WTC11 (cell line): ENCODE measurements at regions of chr20 and their contacts with region 1.

Region 1: DNA sequence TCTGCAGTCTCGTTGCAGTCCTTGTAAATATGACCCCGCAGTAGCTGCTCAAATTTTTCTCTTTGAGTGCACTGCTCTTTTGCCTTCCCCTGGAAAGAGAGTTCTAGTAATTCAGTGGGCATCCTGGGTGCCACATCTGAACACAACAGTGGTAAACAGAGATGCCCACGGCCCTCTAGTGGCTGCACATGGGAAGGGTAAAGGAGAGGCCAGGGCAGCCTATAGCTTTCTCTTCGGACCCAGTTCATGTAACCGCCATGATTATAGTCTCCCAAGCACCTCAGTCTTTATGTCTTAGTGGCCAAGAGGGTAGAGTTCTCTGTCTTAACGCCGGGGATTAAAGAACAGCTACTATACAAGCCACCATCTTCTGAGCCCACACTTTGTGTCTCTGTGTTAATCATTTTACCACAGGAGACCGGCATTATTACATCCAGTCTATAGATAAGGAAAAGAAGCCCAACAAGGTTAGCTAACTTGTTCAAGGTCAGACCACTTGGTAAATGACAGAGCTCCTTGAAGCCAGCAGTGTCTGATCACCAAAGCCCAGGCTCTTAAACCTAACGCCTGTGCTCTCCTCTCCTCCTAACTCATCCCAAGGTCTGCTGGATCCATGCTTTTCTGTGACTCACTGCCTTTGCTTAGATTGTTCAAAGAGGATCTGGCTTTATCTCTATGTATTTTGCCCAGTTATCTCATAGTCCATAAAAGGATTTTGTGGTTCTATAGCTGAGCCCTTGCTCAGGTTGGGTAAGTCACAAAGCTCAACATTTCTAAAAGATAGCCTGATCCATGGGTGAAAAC is 81.8 kb downstream of the ISM1 start:
- DNase-seq: peak; percentile 54
- ATAC-seq: peak; percentile 91
- H3K4me3 Mint-ChIP-seq: no peak overlapping the region
- H3K27ac Mint-ChIP-seq: no peak overlapping the region
- H3K4me1 Mint-ChIP-seq: 0 out of 2 replicates have a peak, but pooled peaks cover 4% of the 10 kb centered on the region
- H3K27me3 Mint-ChIP-seq: no peaks in the 10 kb centered on the region; the same call in 1 of the 2 replicates
- CTCF ChIP-seq: peak; percentile 39; the same call in 1 of the 2 replicates

Region 2: DNA sequence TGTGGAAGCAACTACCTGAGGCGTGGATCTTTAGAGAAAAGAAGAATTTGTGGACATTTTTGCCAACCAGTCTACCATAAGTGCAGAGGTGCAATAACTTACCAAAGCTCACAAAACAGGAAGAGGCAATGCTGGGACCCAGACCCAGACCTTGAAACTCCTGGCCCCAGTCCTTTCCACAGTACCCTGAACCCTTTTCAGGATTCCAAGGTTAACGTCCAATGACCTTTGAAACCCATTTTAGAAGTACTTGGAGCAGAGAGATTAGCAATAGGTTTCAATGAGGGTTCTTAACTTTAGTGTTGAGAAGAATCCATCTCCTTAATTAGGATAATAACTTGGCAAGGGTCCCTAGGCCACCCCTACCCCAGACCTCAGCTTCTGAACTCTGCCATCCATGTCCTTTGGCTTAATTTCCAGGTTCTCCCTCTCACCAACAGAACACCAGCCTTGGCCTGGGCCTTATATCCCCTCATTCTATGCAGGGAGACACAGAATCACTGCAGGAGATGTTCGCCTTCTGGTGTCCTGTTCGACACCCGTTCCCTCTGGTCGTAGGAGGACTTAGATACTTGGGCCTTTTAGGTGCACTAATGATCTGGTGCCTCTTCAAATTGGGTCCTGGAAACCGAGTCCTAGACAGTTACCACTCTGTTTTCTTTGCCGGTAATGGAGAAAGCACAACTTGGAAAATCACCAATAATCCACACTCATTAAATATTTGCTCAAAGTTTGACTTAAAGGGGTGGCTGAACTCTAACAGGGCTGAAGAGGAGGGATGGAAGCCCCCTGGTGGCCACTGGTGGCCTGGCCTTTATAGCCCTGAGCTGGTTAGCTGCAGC is 41.2 kb before region 1 on chr20:
- CTCF ChIA-PET with region 1: interaction called, 17 read pairs
- POLR2A ChIA-PET with region 1: no interaction called
- DNase-seq: peak; percentile 78
- ATAC-seq: peak; percentile 99
- H3K4me3 Mint-ChIP-seq: no peak overlapping the region
- H3K27ac Mint-ChIP-seq: no peak overlapping the region
- H3K4me1 Mint-ChIP-seq: no peaks in the 10 kb centered on the region
- H3K27me3 Mint-ChIP-seq: no peaks in the 10 kb centered on the region
- CTCF ChIP-seq: peak; percentile 81

Region 3: DNA sequence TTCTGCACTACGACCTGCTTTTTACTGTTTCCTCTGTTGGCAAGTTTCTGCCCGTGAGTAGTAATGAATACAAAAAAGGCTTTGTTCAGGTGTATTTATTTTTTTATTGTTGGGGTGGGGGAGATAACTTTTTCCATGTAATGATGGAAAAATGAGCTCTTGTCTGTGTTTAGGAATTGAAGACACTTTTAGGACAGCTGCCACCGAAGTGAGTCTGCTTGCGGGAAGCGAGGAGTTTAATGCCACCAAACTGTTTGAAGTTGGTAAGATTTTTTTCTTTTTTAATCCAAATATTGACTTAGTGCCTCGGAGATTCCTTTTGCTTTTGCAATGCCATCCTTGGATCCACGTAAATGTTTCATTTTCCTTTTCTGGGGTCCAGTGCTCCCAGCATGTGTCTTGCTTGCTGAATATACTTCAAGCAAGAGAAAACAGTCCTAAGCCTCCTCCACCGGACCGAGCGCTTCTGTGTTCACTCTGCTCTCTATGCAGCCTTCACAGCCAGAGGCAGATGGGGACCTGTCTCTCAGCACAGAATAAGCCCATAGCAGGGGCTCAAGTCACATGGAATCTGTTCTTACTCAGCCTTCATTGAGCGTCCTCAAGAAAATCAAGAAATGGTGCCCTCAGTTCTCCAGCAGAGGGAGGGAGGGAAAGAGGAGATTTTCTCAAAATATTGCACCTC is 10.5 kb before region 1 on chr20:
- CTCF ChIA-PET with region 1: interaction called, 12 read pairs
- POLR2A ChIA-PET with region 1: interaction called, 8 read pairs
- DNase-seq: no peak
- ATAC-seq: no peak
- H3K4me3 Mint-ChIP-seq: no peak overlapping the region
- H3K27ac Mint-ChIP-seq: no peak overlapping the region
- H3K4me1 Mint-ChIP-seq: peaks cover 4% of the 10 kb centered on the region; the same call in 1 of the 2 replicates
- H3K27me3 Mint-ChIP-seq: no peaks in the 10 kb centered on the region
- CTCF ChIP-seq: no peak

Region 4: DNA sequence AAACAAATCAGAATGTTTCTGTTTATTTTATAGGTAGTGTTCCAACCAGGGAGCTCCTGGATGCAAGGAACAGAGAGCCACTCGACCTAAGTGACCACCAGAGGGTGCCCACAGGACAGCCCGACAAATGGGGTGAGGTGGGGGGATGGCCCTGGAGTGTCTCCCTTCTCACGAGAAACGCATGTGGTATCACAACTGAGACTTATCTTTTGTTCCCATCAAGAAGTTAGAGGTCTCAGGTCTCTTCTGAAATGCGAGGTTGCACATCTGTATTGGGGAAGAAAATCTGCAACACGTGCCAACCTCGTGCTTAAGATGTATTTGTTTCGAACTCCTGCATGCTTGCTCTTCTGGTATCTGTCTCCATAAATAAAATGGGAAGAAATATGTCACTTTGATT is 22.2 kb after region 1 on chr20:
- CTCF ChIA-PET with region 1: interaction called, 19 read pairs
- POLR2A ChIA-PET with region 1: no interaction called
- DNase-seq: peak; percentile 78
- ATAC-seq: peak; percentile 99
- H3K4me3 Mint-ChIP-seq: no peak overlapping the region
- H3K27ac Mint-ChIP-seq: no peak overlapping the region
- H3K4me1 Mint-ChIP-seq: peaks cover 29% of the 10 kb centered on the region
- H3K27me3 Mint-ChIP-seq: no peaks in the 10 kb centered on the region; the same call in 1 of the 2 replicates
- CTCF ChIP-seq: peak; percentile 35; the same call in 1 of the 2 replicates

Region 5: GRCh38 chr20:13363473-13363872 is 60.6 kb after region 1 on chr20:
- CTCF ChIA-PET with region 1: no interaction called
- POLR2A ChIA-PET with region 1: no interaction called
- DNase-seq: no peak
- ATAC-seq: no peak
- H3K4me3 Mint-ChIP-seq: no peak overlapping the region
- H3K27ac Mint-ChIP-seq: no peak overlapping the region
- H3K4me1 Mint-ChIP-seq: peaks cover 44% of the 10 kb centered on the region
- H3K27me3 Mint-ChIP-seq: no peaks in the 10 kb centered on the region; the same call in 1 of the 2 replicates
- CTCF ChIP-seq: no peak

Region 6: GRCh38 chr20:13546497-13547131 is 243.8 kb after region 1 on chr20:
- CTCF ChIA-PET with region 1: interaction called, 14 read pairs
- POLR2A ChIA-PET with region 1: no interaction called
- DNase-seq: peak; percentile 89
- ATAC-seq: peak; percentile 81
- H3K4me3 Mint-ChIP-seq: no peak overlapping the region
- H3K27ac Mint-ChIP-seq: peak overlapping the region; percentile 77; the same call in 1 of the 2 replicates
- H3K4me1 Mint-ChIP-seq: peaks cover 8% of the 10 kb centered on the region
- H3K27me3 Mint-ChIP-seq: no peaks in the 10 kb centered on the region
- CTCF ChIP-seq: peak; percentile 74